Activated naive CD4-positive, alpha-beta T cell treated with anti-CD3 and anti-CD28 coated beads for 36 hours (primary cell): ENCODE measurements at regions of chr6 and their contacts with region 1.

Region 1: DNA sequence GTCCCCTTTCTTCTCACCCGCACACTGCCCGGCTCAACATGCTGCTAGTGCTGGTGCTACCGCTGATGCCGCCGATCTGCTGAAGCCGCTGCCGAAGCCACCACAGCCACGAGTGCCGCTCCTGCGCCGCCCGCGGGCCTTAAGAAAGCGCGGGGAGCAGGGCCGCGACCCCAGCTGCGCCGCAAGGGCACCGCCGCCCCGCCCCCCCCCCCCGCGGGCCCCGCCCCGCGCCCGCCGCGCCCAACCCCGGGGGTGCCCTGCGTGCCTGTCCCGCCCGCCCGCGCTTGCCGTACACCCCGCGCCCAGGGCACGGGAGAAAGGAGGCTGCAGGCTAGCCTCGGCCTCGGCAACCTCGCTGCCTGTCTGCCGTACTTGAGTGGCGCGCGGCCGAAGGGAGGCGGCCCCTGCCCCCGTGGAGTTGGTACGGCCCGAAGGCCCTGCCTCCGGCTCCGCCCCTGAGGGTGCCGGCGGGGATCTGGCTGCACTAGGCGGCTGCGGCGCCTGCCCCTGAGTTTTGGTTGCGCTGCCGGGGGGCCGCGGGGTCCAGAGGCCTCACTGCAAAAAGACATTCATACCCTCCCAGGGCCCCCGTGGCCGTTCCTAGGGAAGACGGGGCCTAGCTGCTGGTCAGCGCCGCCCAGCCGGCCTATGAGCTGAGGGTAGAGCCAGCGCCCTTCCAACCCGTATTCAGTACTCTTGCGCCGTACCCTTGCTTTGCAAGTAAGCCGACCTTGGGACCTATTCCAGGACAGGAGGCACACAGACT is at the start of gene SOD2:
- DNase-seq: peak; percentile 84
- H3K4me3 Mint-ChIP-seq: peak within 1 kb of the TSS; percentile 95
- H3K27ac Mint-ChIP-seq: peak within 1 kb of the TSS; percentile 96
- H3K4me1 Mint-ChIP-seq: peaks cover 35% of the 10 kb centered on the region
- H3K27me3 Mint-ChIP-seq: no peaks in the 10 kb centered on the region
- total RNA-seq, gene SOD2: 256 to 260 TPM

Region 2: DNA sequence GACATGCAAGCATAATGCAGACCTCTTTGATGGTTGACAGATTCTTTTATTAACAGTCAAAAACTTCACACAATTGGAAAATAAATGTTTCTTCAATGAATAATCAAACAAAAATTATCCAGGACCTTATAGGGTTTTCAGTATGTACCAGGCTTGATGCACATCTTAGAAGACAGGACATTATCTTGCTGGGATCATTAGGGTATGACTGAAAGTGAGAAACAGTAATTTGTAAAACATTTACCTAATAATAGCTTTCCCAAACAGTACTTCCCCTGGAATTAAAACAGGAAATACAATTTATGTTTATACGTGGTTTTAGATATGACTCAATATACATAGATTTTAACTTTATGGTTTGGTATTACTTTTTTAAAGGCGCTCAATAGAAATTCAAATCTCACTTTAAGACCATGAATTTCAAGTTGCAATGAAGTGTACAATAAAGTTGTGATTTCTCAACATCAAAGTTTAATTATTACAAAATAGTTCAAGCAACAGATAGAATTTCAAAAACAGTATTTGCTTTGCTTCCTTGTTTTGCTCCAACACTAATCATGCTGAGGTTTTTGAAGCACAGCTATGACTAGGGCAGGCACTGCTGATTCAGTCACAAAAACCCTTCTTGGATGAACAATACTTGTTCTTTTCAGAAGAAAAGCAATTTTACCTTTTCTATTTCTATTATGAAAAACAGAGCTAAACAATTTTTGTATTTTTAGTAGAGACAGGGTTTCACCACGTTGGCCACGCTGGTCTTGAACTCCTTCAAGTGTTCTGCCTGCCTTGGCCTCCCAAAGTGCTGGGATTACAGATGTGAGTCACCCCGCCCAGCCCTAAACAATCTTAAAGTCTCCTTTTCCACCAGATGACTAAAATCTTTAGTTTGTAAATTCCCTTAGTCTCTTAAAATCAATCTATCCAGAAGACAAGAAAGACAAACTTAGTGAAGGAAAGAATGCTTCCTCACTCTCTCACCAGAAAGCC is 13.9 kb before region 1 on chr6:
- CTCF ChIA-PET with region 1: interaction called, 12 read pairs
- intact Hi-C with region 1: loop called (anchors 1 kb)
- DNase-seq: peak; percentile 69
- H3K4me3 Mint-ChIP-seq: peak overlapping the region; percentile 11
- H3K27ac Mint-ChIP-seq: peak overlapping the region; percentile 88
- H3K4me1 Mint-ChIP-seq: peaks cover 39% of the 10 kb centered on the region
- H3K27me3 Mint-ChIP-seq: no peaks in the 10 kb centered on the region

Region 3: DNA sequence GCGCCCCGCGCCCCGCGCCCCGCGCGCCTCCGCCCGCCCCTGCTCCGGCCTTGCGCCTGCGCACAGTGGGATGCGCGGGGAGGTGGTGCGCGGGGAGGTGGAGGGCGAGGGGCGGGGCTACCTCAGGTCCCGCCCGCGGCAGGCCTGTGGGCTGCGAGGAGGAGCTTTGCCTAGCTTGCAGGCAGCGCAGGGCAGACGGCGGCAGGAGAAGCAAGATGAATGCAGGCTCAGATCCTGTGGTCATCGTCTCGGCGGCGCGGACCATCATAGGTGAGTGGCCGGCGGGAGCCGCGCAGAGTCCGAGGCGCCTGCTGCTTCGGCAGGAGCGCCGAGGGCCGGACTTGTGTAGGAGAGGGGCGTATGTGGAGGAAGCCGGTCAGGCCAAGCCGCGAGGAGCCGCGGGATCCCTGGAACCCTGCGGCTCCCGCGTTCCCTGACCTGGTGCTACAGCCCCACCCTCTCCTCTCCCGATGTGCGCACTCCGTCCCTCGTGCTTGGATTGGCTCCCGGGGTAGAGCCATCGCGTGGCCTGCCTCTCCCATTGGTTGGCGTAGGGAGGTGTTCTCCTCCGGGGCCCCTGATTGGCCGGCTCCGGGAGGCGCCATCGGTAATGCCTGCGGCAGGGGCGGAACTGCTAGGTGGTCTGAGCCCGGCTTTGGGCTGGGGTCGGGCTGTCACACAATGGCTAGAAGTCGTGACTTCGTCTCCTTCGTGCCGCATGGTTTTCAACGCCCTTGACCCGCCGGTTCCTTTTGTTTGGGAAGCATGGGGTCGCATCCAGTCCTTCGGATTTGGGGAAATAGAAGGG is 68.8 kb after region 1 on chr6 and contains the start of gene ACAT2:
- CTCF ChIA-PET with region 1: interaction called, 5 read pairs
- intact Hi-C with region 1: loop called (anchors 1 kb)
- DNase-seq: peak; percentile 97
- H3K4me3 Mint-ChIP-seq: peak within 1 kb of the TSS; percentile 96
- H3K27ac Mint-ChIP-seq: peak within 1 kb of the TSS; percentile 96
- H3K4me1 Mint-ChIP-seq: peaks cover 42% of the 10 kb centered on the region
- H3K27me3 Mint-ChIP-seq: no peaks in the 10 kb centered on the region
- total RNA-seq, gene ACAT2: 84.9 to 92.4 TPM

Region 4: GRCh38 chr6:159929819-159930218 is 236.5 kb after region 1 on chr6:
- CTCF ChIA-PET with region 1: no interaction called
- intact Hi-C with region 1: loop called (anchors 1 kb)
- DNase-seq: peak; percentile 49
- H3K4me3 Mint-ChIP-seq: no peak overlapping the region
- H3K27ac Mint-ChIP-seq: no peak overlapping the region
- H3K4me1 Mint-ChIP-seq: peaks cover 31% of the 10 kb centered on the region
- H3K27me3 Mint-ChIP-seq: peaks cover 3% of the 10 kb centered on the region

Region 5: GRCh38 chr6:160102956-160103824 is 409.9 kb after region 1 on chr6:
- CTCF ChIA-PET with region 1: no interaction called
- intact Hi-C with region 1: loop called (anchors 1 kb)
- DNase-seq: peak; percentile 45
- H3K4me3 Mint-ChIP-seq: no peak overlapping the region
- H3K27ac Mint-ChIP-seq: no peak overlapping the region
- H3K4me1 Mint-ChIP-seq: peaks cover 24% of the 10 kb centered on the region
- H3K27me3 Mint-ChIP-seq: no peaks in the 10 kb centered on the region